ENCODE measurements at regions of chr12 and their contacts with region 1.

Region 1: DNA sequence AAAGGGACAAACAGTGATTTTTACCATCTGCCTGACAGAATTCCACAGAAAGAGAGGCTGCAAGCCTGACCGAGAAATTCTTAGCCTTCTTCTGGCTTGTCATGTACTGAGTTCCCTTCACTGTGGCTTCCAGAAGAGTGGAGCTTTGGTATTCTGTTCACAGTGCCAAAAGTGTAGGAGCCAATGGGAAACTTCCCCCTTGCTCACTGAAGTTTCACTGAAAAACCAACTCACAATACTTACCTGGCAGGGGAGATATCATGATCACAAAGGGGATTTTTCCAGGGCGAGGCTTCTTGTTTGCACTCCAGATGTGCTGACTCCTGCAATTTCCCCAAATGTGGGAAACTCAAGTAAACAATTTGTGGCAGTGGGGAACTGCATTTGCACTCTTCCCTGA is 31.7 kb upstream of the MMP19 start:
- DNase-seq: no peak
- ATAC-seq: peak; percentile 48; the same call in 1 of the 2 replicates
- H3K4me3 ChIP-seq: no peak overlapping the region
- H3K27ac ChIP-seq: no peak overlapping the region
- H3K4me1 ChIP-seq: no peaks in the 10 kb centered on the region
- H3K27me3 ChIP-seq: no peaks in the 10 kb centered on the region
- CTCF ChIP-seq: no peak
- POLR2A ChIP-seq: no peak
- RAD21 ChIP-seq: no peak

Region 2: DNA sequence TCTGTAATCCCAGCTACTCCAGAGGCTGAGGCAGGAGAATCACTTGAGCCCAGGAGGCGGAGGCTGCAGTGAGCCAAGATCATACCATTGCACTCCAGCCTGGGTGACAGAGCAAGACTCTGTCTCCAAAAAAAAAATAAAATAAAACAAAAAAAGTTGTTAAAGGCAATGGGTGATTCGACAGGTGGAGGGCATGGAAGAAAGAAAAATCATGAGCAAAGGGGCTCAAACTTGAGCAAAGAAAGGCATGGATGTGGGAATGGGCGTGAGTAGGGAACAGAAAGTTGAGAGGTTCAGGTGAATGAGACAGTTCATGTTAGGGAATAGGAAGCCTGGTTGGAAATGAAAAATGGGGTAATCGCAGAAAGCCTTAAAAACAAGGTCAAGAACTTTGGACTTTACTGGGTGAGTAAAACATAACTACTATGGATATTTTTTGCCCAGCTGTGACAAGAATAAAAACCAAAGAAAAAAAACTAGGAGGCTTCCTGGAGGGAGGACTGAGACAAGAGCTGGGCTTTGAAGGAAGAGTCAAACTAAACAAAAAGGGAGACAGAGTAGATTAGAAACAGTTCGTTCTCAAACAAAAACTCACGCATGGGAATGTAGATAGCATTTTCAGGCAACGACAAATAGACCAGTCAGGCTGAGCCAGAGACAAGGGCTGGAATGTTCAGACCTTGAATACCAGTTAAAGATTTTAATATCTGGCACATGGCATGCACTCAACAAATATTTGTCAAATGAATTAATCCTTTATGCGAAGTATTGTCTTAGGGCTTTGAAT is 34.5 kb after region 1 on chr12:
- CTCF ChIA-PET with region 1: no interaction called
- POLR2A ChIA-PET with region 1: no interaction called
- dilution Hi-C with region 1: no loop called
- in situ Hi-C with region 1: no loop called
- intact Hi-C with region 1: loop called (anchors 5 kb)
- DNase-seq: peak; percentile 51
- ATAC-seq: peak; percentile 91
- H3K4me3 ChIP-seq: no peak overlapping the region
- H3K27ac ChIP-seq: peak overlapping the region; percentile 3; the same call in 1 of the 2 replicates
- H3K4me1 ChIP-seq: peaks cover 2% of the 10 kb centered on the region
- H3K27me3 ChIP-seq: no peaks in the 10 kb centered on the region
- CTCF ChIP-seq: no peak
- POLR2A ChIP-seq: no peak
- RAD21 ChIP-seq: no peak